IMR-90 (cell line): ENCODE measurements at regions of chr14 and their contacts with region 1.

Region 1: DNA sequence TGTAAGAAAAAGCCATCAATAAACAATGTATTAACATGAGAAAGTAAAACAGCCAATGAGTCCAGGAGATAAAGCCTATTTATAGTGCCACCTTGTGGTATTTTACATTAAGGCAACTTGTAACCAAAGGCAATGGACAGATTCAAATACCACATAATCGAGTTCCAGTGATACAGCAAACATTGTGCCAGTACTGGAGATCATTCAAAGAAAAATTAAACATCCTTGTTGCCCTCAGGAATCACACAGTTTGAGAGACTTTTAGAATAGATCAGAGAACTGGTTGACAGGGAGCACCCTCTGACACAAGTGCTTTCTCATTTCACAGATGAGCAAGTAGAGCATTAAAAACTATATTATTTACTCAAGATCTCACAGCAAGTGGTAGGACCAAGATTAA is 98.1 kb downstream of the DDHD1 start:
- DNase-seq: peak; percentile 72
- ATAC-seq: peak; percentile 95
- H3K4me3 ChIP-seq: no peak overlapping the region
- H3K27ac ChIP-seq: no peak overlapping the region
- H3K4me1 ChIP-seq: peaks cover 3% of the 10 kb centered on the region
- H3K27me3 ChIP-seq: no peaks in the 10 kb centered on the region
- CTCF ChIP-seq: peak; percentile 80
- POLR2A ChIP-seq: no peak
- RAD21 ChIP-seq: peak; percentile 90

Region 2: GRCh38 chr14:52824507-52824906 is 230.5 kb before region 1 on chr14:
- CTCF ChIA-PET with region 1: no interaction called
- POLR2A ChIA-PET with region 1: no interaction called
- dilution Hi-C with region 1: no loop called
- in situ Hi-C with region 1: loop called (anchors 5 kb)
- intact Hi-C with region 1: loop called (anchors 1 kb)
- DNase-seq: peak; percentile 18
- ATAC-seq: no peak; the same call in 1 of the 2 replicates
- H3K4me3 ChIP-seq: no peak overlapping the region
- H3K27ac ChIP-seq: no peak overlapping the region
- H3K4me1 ChIP-seq: peaks cover 3% of the 10 kb centered on the region
- H3K27me3 ChIP-seq: no peaks in the 10 kb centered on the region
- CTCF ChIP-seq: no peak
- POLR2A ChIP-seq: no peak
- RAD21 ChIP-seq: no peak